ENCODE measurements at regions of chr9 and their contacts with region 1.

Region 1: DNA sequence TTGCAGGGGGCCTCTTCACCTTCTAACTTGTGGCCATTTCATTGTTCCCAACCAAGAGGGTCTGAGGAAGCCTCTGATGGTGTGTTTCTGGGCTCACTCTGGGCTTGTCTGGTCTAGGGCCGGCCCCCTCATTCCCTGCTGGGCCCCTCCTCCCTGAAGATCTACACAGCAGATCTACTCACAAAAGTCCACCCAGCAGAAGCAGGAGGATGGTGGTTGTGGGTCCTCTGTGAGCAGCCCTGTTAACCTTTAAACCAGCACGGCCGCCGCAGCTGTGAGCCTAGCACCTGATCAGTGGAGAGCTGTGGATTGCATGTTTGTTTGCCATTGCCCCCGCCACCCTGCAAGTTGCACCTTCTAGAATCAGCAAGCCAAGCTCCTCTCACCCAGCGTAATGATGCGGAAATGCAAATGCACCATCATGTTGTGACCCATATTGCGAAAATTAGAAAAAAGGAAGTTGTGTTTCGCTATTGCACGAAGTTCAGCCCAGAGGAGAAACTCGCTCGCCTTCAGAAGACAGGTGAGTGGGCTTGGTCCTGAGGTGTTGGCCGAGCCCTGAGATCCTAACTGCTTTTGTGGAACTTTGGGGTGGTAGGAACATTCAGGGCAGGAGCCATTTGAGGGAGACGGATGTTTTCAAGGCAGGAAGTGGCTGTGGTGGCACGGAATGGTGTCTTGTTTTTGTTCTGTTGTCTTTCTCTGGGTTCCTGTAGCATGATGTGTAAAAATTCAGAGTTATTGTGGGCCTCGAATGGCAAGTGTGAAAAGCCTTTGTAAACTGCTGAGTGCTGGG is 16.7 kb downstream of the FGD3 start:
- DNase-seq: peak; percentile 93
- H3K4me3 ChIP-seq: peak overlapping the region; percentile 72
- H3K27ac ChIP-seq: peak overlapping the region; percentile 69
- H3K4me1 ChIP-seq: peaks cover 38% of the 10 kb centered on the region
- CTCF ChIP-seq: no peak

Region 2: DNA sequence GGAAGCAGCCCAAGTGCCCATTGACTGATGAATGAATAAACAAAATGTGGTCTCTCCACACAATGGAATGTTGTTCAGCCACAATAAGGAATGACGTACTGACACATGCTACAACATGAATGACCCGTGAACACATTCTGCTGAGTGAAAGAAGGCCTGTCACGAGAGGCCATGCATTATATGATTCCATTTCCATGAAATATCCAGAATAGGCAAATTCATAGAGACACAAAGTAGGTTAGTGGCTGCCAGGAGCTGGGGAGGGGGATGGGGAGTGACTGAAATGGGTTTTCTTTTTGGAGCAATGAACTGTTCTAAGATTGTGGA is 240.8 kb before region 1 on chr9:
- CTCF ChIA-PET with region 1: no interaction called
- POLR2A ChIA-PET with region 1: no interaction called
- intact Hi-C with region 1: loop called (anchors 5 kb)
- DNase-seq: no peak
- H3K4me3 ChIP-seq: peak overlapping the region; percentile 56
- H3K27ac ChIP-seq: peak overlapping the region; percentile 96
- H3K4me1 ChIP-seq: peaks cover 100% of the 10 kb centered on the region
- CTCF ChIP-seq: no peak

Region 3: GRCh38 chr9:93001031-93001430 is 37.0 kb after region 1 on chr9:
- CTCF ChIA-PET with region 1: no interaction called
- POLR2A ChIA-PET with region 1: no interaction called
- intact Hi-C with region 1: no loop called
- DNase-seq: no peak
- H3K4me3 ChIP-seq: no peak overlapping the region
- H3K27ac ChIP-seq: no peak overlapping the region
- H3K4me1 ChIP-seq: peaks cover 8% of the 10 kb centered on the region
- CTCF ChIP-seq: no peak

Region 4: GRCh38 chr9:93058355-93059096 is 94.5 kb after region 1 on chr9 and contains the start of gene SUSD3:
- CTCF ChIA-PET with region 1: interaction called, 3 read pairs
- POLR2A ChIA-PET with region 1: no interaction called
- intact Hi-C with region 1: loop called (anchors 1 kb)
- DNase-seq: peak; percentile 97
- H3K4me3 ChIP-seq: peak within 1 kb of the TSS; percentile 79
- H3K27ac ChIP-seq: peak within 1 kb of the TSS; percentile 95
- H3K4me1 ChIP-seq: peaks cover 76% of the 10 kb centered on the region
- CTCF ChIP-seq: no peak
- total RNA-seq, gene SUSD3: 160 and 201 TPM in 2 replicates

Measured in OCI-LY7 (cell line).